Activated CD4-positive, alpha-beta T cell treated with anti-CD3 and anti-CD28 coated beads, Interleukin-2, amount 10 ng/mL, durations not matched to agents 24 days and 14 days (primary cell): ENCODE measurements at regions of chr5 and their contacts with region 1.

Region 1: DNA sequence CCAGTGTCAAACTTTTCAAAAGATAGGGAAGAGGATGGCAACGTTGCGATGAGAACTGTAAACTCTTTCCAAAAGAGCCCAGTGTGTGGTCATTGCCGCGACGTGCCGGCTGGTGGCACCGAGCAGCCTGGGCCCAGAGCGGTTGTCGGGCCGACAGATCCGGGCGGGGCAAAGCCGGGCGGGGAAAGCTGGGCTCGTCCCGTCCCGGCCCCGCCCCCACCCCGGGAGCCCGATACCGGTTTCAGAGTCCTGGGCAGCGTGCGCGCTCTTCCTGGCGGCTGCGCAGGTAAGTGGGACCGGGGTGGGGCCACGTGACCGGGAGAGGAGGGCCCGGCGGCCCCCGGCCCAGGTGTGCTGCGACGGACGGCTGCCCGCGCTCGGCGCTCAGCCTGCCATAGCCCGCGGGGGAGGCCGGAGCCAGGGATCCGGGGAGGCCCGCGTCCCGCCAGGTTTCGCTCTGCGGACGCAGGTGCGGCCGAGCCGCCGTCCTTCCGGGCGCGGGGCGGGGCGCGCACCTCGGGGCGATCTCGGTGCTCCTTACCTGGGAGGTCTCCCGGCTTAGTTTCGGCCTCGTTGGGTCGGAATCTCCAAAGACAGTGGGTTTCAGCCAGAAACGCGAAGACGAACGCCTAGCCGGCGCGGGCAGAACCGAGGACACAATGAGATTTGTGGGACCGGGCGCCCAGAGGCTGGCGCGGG is at the start of gene MARVELD2:
- DNase-seq: peak; percentile 72
- H3K4me3 Mint-ChIP-seq: peak within 1 kb of the TSS; percentile 48
- H3K27ac Mint-ChIP-seq: no peak within 1 kb of the TSS
- H3K4me1 Mint-ChIP-seq: no peaks in the 10 kb centered on the region
- H3K27me3 Mint-ChIP-seq: peaks cover 2% of the 10 kb centered on the region
- total RNA-seq, gene MARVELD2: 0.26 and 0.36 TPM in 2 replicates

Region 2: DNA sequence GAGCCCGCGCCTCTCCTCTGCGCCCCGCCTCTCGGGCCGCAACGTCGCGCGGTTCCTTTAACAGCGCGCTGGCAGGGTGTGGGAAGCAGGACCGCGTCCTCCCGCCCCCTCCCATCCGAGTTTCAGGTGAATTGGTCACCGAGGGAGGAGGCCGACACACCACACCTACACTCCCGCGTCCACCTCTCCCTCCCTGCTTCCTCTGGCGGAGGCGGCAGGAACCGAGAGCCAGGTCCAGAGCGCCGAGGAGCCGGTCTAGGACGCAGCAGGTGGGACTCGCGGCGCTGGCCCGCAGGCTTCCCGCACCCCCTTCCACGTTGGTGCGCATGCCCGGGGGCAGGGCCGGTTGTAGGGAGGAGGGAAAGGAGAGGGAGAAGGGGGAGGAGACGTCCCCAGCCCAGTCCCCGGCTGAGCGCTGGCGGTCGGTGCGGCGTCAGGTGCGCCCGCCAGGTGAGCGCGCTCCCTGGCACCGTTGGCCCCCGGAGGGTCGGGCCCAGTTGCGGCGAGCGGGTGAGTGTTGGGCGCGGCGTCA is 77.4 kb after region 1 on chr5 and contains the start of gene OCLN:
- intact Hi-C with region 1: loop called (anchors 10 kb)
- DNase-seq: peak; percentile 65
- H3K4me3 Mint-ChIP-seq: peak within 1 kb of the TSS; percentile 84
- H3K27ac Mint-ChIP-seq: no peak within 1 kb of the TSS
- H3K4me1 Mint-ChIP-seq: peaks cover 4% of the 10 kb centered on the region
- H3K27me3 Mint-ChIP-seq: peaks cover 61% of the 10 kb centered on the region
- total RNA-seq, gene OCLN: 0.12 and 0.14 TPM in 2 replicates